Endothelial cell of umbilical vein (primary cell): ENCODE measurements at regions of chr11 and their contacts with region 1.

Region 1: DNA sequence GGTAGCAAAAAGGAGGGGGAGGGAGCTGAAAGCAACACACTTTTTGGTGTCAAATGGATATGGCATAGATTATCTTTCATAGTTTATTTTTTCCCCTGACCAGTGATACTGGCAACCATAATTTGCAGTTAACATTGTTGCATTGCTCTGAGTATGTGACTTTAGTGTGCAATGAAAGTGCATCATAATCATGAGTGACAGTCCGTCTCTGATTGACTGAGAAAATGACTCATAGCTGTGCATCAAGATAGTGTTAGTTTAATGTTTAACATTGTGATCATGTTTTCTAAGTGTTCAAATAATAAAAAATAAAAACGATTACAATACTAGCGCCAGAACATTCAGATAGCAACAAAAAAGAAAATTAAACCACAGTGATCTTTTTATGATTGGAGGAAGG is 952.4 kb upstream of the TENM4 start:
- DNase-seq: no peak
- H3K4me3 ChIP-seq: no peak overlapping the region
- H3K27ac ChIP-seq: no peak overlapping the region
- H3K4me1 ChIP-seq: no peaks in the 10 kb centered on the region
- H3K27me3 ChIP-seq: no peaks in the 10 kb centered on the region
- CTCF ChIP-seq: no peak
- POLR2A ChIP-seq: no peak

Region 2: GRCh38 chr11:79809487-79809886 is 583.7 kb before region 1 on chr11:
- CTCF ChIA-PET with region 1: no interaction called
- POLR2A ChIA-PET with region 1: no interaction called
- dilution Hi-C with region 1: no loop called
- intact Hi-C with region 1: loop called (anchors 5 kb)
- DNase-seq: no peak
- H3K4me3 ChIP-seq: no peak overlapping the region
- H3K27ac ChIP-seq: no peak overlapping the region
- H3K4me1 ChIP-seq: no peaks in the 10 kb centered on the region
- H3K27me3 ChIP-seq: no peaks in the 10 kb centered on the region
- CTCF ChIP-seq: no peak
- POLR2A ChIP-seq: no peak